RWPE1 (cell line): ENCODE measurements at regions of chr10 and their contacts with region 1.

Region 1: DNA sequence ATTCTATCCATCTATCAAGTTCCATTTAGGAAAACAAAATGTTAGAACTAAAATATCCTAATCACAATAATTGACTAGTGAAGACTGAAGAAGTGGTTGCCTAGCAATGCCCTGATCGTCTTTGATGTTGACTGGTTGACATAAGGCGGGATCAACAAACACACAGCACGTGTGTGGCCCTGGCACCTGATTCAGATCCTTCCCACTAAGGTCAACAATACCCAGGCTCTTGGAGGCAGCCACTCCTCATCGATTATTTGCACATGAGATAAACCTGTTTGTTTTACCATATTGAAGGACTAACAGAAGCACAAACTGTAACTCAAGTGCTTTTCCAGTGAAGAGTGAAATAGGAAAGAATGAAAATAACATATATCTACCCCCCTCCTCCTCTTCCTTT is 15.6 kb downstream of the FANK1 start:
- DNase-seq: no peak
- H3K27ac ChIP-seq: no peak overlapping the region
- CTCF ChIP-seq: no peak

Region 2: DNA sequence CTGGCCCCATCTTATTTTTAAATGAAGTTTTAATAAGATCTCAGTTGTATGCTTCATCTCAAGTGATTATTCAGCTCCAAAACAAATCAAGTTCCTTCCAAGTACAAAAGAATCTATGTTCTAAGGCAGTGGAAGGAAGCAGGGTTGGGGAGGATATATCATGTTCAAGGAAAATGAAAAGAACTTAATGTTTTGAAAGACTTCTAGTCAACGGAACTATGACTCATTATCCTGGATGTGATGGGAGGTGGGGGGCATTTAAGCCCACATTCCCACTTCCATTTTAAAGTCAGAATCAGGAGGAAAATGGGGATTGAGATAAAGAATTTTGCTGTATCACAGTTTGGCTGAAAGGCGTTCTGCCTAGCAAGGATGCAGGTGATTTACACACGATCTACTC is 43.8 kb after region 1 on chr10:
- CTCF ChIA-PET with region 1: no interaction called
- POLR2A ChIA-PET with region 1: interaction called, 11 read pairs
- DNase-seq: no peak
- H3K27ac ChIP-seq: no peak overlapping the region
- CTCF ChIP-seq: no peak